PC-9 (cell line): ENCODE measurements at regions of chrX and their contacts with region 1.

Region 1: GRCh38 chrX:115330498-115331168 is 41.1 kb downstream of the LUZP4 start:
- DNase-seq: peak; percentile 57 to 65
- H3K4me3 ChIP-seq: no peak overlapping the region
- H3K27ac ChIP-seq: no peak overlapping the region
- H3K4me1 ChIP-seq: 0 out of 2 replicates have a peak, but pooled peaks cover 6% of the 10 kb centered on the region
- H3K27me3 ChIP-seq: no peaks in the 10 kb centered on the region
- CTCF ChIP-seq: peak; percentile 88

Region 2: DNA sequence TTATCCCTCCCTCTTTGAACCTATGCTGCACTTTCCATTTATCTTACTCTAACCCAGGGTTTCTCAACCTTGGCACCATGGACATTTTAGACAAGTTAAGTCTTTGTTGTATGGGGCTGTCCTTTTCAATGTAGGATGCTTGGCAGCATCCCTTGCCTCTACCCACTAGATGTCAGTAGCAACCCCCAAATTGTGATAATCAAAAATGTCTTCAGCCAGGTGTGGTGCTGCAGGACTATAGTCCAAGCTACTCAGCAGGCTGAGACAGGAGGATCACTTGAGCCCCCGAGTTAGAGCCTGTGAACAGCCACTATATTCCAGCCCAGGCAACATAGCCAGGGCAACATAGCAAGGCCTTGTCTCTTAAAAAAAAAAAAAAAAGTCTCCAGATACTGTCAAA is 103.7 kb before region 1 on chrX:
- CTCF ChIA-PET with region 1: no interaction called
- POLR2A ChIA-PET with region 1: no interaction called
- intact Hi-C with region 1: loop called (anchors 1 kb)
- DNase-seq: peak; percentile 27 to 63
- H3K4me3 ChIP-seq: no peak overlapping the region
- H3K27ac ChIP-seq: no peak overlapping the region
- H3K4me1 ChIP-seq: peaks cover 16% of the 10 kb centered on the region
- H3K27me3 ChIP-seq: no peaks in the 10 kb centered on the region
- CTCF ChIP-seq: peak; percentile 80

Region 3: GRCh38 chrX:115297189-115297588 is 33.4 kb before region 1 on chrX:
- CTCF ChIA-PET with region 1: no interaction called
- POLR2A ChIA-PET with region 1: no interaction called
- intact Hi-C with region 1: no loop called
- DNase-seq: peak in 1 of 2 experiments; percentile 56
- H3K4me3 ChIP-seq: no peak overlapping the region
- H3K27ac ChIP-seq: no peak overlapping the region
- H3K4me1 ChIP-seq: peaks cover 9% of the 10 kb centered on the region; the same call in 1 of the 2 replicates
- H3K27me3 ChIP-seq: no peaks in the 10 kb centered on the region
- CTCF ChIP-seq: no peak

Region 4: DNA sequence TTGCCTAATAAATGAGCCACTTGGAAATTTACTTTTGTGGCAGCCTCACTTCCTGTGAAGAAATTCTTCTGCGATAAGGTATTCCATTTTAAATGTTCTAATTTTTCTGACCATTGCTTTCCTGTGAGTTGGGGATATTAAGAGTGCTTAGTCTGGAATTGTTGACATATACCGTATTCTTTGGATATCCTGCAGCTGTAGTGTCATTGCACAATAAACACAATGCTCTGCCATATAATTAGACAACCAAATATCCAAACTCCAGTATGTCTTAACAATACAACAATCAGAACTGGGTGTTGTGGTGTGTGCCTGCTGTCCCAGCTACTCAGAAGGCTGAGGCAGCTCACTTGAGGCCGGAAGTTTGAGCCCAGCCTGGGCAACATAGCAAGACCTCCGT is 58.2 kb after region 1 on chrX:
- CTCF ChIA-PET with region 1: no interaction called
- POLR2A ChIA-PET with region 1: no interaction called
- intact Hi-C with region 1: no loop called
- DNase-seq: no peak
- H3K4me3 ChIP-seq: no peak overlapping the region
- H3K27ac ChIP-seq: no peak overlapping the region
- H3K4me1 ChIP-seq: peaks cover 27% of the 10 kb centered on the region
- H3K27me3 ChIP-seq: no peaks in the 10 kb centered on the region
- CTCF ChIP-seq: no peak

Region 5: DNA sequence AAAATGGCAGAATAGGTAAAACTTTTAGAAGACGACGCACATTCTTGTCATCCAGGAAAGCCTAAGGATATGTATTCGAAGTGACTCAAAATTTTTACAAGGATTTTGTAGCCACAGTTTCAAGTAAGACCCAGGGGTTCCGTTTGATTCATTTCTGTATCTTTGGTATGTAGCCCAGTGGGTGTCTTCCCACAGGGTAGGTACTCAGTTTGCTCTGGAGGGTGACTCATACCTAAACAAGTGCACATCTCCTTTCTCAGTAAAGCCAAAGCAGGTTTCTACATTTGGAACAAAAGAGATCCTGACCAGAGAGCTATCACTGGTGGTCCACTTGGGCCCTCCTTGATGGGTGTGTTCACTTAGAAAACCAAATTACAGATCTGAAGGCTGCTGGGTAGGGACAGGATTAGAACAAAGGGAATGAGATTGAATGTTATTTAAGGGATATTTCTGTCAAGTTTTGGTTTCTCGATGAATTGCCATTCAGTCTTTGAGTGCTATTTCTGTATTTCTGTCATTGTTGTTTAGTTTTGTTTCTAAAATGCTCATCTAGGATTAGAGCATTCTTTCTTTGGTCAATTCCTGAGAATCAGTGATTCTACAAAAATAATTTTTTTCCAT is 286.4 kb after region 1 on chrX:
- CTCF ChIA-PET with region 1: no interaction called
- POLR2A ChIA-PET with region 1: interaction called, 47 read pairs
- intact Hi-C with region 1: no loop called
- DNase-seq: peak; percentile 50 to 98
- H3K4me3 ChIP-seq: no peak overlapping the region
- H3K27ac ChIP-seq: peak overlapping the region; percentile 83
- H3K4me1 ChIP-seq: peaks cover 39% of the 10 kb centered on the region
- H3K27me3 ChIP-seq: no peaks in the 10 kb centered on the region
- CTCF ChIP-seq: no peak

Region 6: GRCh38 chrX:115642895-115643530 is 312.4 kb after region 1 on chrX:
- CTCF ChIA-PET with region 1: interaction called, 7 read pairs
- POLR2A ChIA-PET with region 1: no interaction called
- intact Hi-C with region 1: loop called (anchors 1 kb)
- DNase-seq: peak; percentile 41 to 44
- H3K4me3 ChIP-seq: no peak overlapping the region
- H3K27ac ChIP-seq: peak overlapping the region; percentile 20; the same call in 1 of the 2 replicates
- H3K4me1 ChIP-seq: no peaks in the 10 kb centered on the region
- H3K27me3 ChIP-seq: no peaks in the 10 kb centered on the region
- CTCF ChIP-seq: peak; percentile 99

Region 7: DNA sequence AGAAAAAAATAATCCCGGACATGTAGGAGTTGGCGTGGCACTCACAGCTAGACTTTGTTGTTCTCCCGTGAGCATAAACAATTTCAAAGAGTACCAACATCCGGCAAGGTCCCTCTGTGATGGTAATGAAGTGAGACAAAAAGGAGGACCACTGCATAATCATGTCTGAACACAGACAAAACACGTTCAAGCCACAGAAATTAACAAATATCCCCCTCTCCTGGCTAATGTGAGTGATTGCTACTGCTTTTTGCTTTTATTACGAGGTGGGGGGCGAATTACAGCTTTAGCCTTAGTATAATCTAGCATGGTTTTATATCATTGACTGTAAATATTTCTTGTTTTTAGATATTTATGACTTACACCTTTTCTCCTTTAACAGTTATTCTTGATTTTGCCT is 348.8 kb after region 1 on chrX:
- CTCF ChIA-PET with region 1: no interaction called
- POLR2A ChIA-PET with region 1: no interaction called
- intact Hi-C with region 1: loop called (anchors 1 kb)
- DNase-seq: no peak
- H3K4me3 ChIP-seq: no peak overlapping the region
- H3K27ac ChIP-seq: no peak overlapping the region
- H3K4me1 ChIP-seq: no peaks in the 10 kb centered on the region
- H3K27me3 ChIP-seq: no peaks in the 10 kb centered on the region
- CTCF ChIP-seq: peak; percentile 61

Region 8: GRCh38 chrX:115690511-115691216 is 360.0 kb after region 1 on chrX:
- CTCF ChIA-PET with region 1: no interaction called
- POLR2A ChIA-PET with region 1: no interaction called
- intact Hi-C with region 1: loop called (anchors 1 kb)
- DNase-seq: peak; percentile 55 to 65
- H3K4me3 ChIP-seq: no peak overlapping the region
- H3K27ac ChIP-seq: no peak overlapping the region
- H3K4me1 ChIP-seq: peaks cover 4% of the 10 kb centered on the region; the same call in 1 of the 2 replicates
- H3K27me3 ChIP-seq: no peaks in the 10 kb centered on the region
- CTCF ChIP-seq: peak; percentile 92